ENCODE measurements at regions of chr7 and their contacts with region 1.

Region 1: DNA sequence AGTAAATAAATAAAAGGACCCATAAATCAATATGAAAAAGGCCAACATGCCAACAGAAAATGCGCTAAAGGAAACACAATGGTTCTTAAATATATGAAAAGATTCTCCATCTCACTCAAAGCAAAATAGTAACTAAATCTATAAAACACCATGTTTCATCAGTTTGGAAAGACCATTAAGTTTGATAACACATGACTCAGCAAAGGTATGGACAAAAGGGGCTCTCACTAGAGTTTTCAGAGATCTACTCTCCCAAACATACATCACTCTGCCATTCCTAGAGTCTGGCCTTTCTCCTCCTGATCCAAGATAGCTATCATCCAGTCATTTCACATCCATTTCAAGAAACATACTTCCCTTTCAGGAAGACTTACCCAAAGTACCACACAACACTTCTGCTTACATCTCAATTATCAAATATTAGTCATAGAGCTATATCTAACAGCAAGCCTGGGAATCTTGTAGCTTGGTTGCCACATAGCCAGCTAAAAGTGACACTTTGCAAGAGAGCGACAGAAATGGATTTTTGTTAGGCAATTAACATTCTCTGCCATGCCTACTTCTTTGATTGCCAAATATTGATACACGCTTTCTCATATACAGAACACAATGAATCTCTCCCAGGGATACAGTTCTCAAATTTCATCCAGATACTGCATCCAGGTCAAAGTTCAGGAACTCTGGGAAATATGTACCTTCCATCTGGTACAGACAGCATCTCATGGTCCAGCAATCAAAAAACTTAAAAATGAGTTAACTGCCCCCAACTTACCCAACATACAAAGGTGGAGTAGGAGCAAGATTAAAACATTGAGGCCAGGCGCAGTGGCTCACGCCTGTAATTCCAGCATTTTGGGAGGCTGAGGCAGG is 28.8 kb downstream of the TOMM7 start:
- DNase-seq: no peak
- H3K4me3 ChIP-seq: no peak overlapping the region
- H3K27me3 ChIP-seq: no peaks in the 10 kb centered on the region
- CTCF ChIP-seq: no peak

Region 2: GRCh38 chr7:22759721-22760120 is 34.1 kb before region 1 on chr7:
- CTCF ChIA-PET with region 1: no interaction called
- POLR2A ChIA-PET with region 1: no interaction called
- DNase-seq: no peak
- H3K4me3 ChIP-seq: no peak overlapping the region
- H3K27me3 ChIP-seq: no peaks in the 10 kb centered on the region
- CTCF ChIP-seq: no peak

Region 3: DNA sequence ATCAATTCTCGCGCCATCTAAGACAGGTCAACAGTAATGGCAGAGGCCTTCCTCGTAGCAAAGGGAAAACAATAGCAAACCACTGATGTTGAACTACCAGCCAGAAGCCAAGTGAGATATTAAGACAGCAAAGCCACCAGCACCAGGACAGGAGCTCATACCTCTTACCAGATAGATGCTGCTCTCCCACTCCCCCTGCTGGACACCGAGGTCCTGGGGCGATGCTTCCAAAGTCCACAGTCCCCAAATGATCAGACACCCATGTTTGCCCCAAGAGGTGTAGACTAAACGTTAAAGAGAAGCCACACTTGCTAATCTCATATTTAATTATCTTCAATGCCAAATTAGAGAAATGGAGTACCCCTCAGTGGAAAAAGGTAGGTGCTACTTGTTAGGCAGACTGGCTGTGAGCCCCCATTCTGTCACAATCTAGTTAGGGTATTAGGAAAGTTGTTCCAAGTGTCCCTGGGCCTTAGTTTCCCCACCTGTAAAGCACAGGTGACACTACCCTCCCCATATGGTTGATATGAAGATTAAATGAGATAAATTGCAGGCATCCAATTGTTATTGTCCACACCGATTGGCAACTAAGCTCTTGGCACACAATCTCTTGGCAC is 11.1 kb before region 1 on chr7:
- CTCF ChIA-PET with region 1: interaction called, 15 read pairs
- POLR2A ChIA-PET with region 1: no interaction called
- DNase-seq: no peak
- H3K4me3 ChIP-seq: no peak overlapping the region
- H3K27me3 ChIP-seq: no peaks in the 10 kb centered on the region
- CTCF ChIP-seq: peak; percentile 68